A673 (cell line): ENCODE measurements at regions of chr10 and their contacts with region 1.

Region 1: DNA sequence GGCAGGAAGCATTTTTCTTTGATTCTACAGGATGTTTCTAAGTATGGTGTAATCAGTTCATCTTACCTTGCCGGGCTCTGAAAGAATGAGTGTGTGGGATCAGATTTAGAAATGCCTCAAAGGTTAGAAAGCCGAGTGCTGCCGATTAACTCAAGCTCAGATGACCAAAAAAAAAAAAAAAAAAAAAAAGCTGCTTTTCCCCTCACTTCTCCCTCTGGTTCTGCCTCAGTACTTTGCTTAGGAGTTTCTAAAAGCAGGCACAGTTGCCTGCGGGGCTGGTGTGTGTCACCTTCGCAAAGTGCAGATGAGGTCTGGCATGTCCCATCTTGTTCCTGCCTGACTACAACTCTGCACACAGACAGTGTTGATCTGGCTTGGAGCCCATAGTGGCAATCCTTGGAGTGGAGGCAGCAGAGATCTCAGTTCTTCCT is 47.0 kb downstream of the KIAA1217 start:
- DNase-seq: peak; percentile 34
- H3K4me3 ChIP-seq: no peak overlapping the region
- H3K27ac ChIP-seq: no peak overlapping the region
- H3K4me1 ChIP-seq: peaks cover 12% of the 10 kb centered on the region
- H3K27me3 ChIP-seq: no peaks in the 10 kb centered on the region
- CTCF ChIP-seq: no peak

Region 2: GRCh38 chr10:24054431-24054830 is 201.5 kb before region 1 on chr10:
- CTCF ChIA-PET with region 1: no interaction called
- POLR2A ChIA-PET with region 1: no interaction called
- intact Hi-C with region 1: no loop called
- DNase-seq: no peak
- H3K4me3 ChIP-seq: no peak overlapping the region
- H3K27ac ChIP-seq: no peak overlapping the region
- H3K4me1 ChIP-seq: no peaks in the 10 kb centered on the region
- H3K27me3 ChIP-seq: no peaks in the 10 kb centered on the region
- CTCF ChIP-seq: no peak

Region 3: GRCh38 chr10:24223953-24224352 is 31.9 kb before region 1 on chr10:
- CTCF ChIA-PET with region 1: interaction called, 14 read pairs
- POLR2A ChIA-PET with region 1: no interaction called
- intact Hi-C with region 1: no loop called
- DNase-seq: no peak
- H3K4me3 ChIP-seq: no peak overlapping the region
- H3K27ac ChIP-seq: no peak overlapping the region
- H3K4me1 ChIP-seq: peaks cover 4% of the 10 kb centered on the region
- H3K27me3 ChIP-seq: no peaks in the 10 kb centered on the region
- CTCF ChIP-seq: no peak